ENCODE measurements at regions of chr2 and their contacts with region 1.

Region 1: GRCh38 chr2:109457794-109458193 is 156.0 kb downstream of the SEPTIN10 start:
- DNase-seq: no peak
- H3K4me3 Mint-ChIP-seq: no peak overlapping the region
- H3K27ac Mint-ChIP-seq: no peak overlapping the region
- H3K4me1 Mint-ChIP-seq: peaks cover 19% of the 10 kb centered on the region
- H3K27me3 Mint-ChIP-seq: no peaks in the 10 kb centered on the region

Region 2: GRCh38 chr2:109396202-109397180 is 61.3 kb before region 1 on chr2:
- CTCF ChIA-PET with region 1: no interaction called
- intact Hi-C with region 1: loop called (anchors 10 kb)
- DNase-seq: peak; percentile 61
- H3K4me3 Mint-ChIP-seq: no peak overlapping the region
- H3K27ac Mint-ChIP-seq: peak overlapping the region; percentile 59
- H3K4me1 Mint-ChIP-seq: peaks cover 19% of the 10 kb centered on the region
- H3K27me3 Mint-ChIP-seq: no peaks in the 10 kb centered on the region

Region 3: GRCh38 chr2:109527846-109528705 is 70.3 kb after region 1 on chr2:
- CTCF ChIA-PET with region 1: no interaction called
- intact Hi-C with region 1: no loop called
- DNase-seq: no peak
- H3K4me3 Mint-ChIP-seq: no peak overlapping the region
- H3K27ac Mint-ChIP-seq: no peak overlapping the region
- H3K4me1 Mint-ChIP-seq: no peaks in the 10 kb centered on the region
- H3K27me3 Mint-ChIP-seq: peaks cover 2% of the 10 kb centered on the region

Measured in activated naive CD4-positive, alpha-beta T cell treated with anti-CD3 and anti-CD28 coated beads for 36 hours (primary cell).